ENCODE measurements at regions of chr15 and their contacts with region 1.

Region 1: GRCh38 chr15:52256366-52256765 is 39.2 kb downstream of the MYO5C start:
- DNase-seq: peak; percentile 51 to 87 (median 74)
- ATAC-seq: peak; percentile 93
- H3K4me3 ChIP-seq: no peak overlapping the region
- H3K4me3 Mint-ChIP-seq: peak overlapping the region; percentile 71
- H3K27ac ChIP-seq: no peak overlapping the region
- H3K27ac Mint-ChIP-seq: no peak overlapping the region
- H3K4me1 ChIP-seq: peaks cover 13% of the 10 kb centered on the region
- H3K4me1 Mint-ChIP-seq: peaks cover 18% of the 10 kb centered on the region
- H3K27me3 ChIP-seq: no peaks in the 10 kb centered on the region
- H3K27me3 Mint-ChIP-seq: no peaks in the 10 kb centered on the region
- CTCF ChIP-seq: peak; percentile 65

Region 2: DNA sequence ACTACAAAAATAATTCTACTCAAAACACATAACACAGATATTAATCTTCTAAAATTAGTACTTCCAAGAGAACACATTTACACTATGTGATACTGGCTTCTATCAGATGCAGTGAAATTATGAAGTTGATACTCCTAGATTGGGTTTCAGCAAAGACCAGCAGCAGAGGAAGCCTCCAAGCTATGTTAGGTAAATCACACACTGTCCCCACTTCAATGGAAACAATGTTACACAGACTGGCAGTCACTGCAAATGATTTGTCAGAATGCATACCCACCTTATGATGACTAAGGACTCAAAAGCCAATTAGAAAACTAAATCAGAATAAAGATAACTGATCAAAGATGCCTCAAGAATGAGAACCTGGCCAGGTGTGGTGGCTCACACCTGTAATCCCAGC is 129.3 kb after region 1 on chr15:
- CTCF ChIA-PET with region 1: no interaction called
- POLR2A ChIA-PET with region 1: no interaction called
- intact Hi-C with region 1: loop called in 1 of 2 experiments (anchors 5 kb)
- DNase-seq: no peak
- ATAC-seq: no peak
- H3K4me3 ChIP-seq: no peak overlapping the region
- H3K4me3 Mint-ChIP-seq: no peak overlapping the region
- H3K27ac ChIP-seq: no peak overlapping the region
- H3K27ac Mint-ChIP-seq: no peak overlapping the region
- H3K4me1 ChIP-seq: no peaks in the 10 kb centered on the region
- H3K4me1 Mint-ChIP-seq: no peaks in the 10 kb centered on the region
- H3K27me3 ChIP-seq: no peaks in the 10 kb centered on the region
- H3K27me3 Mint-ChIP-seq: no peaks in the 10 kb centered on the region
- CTCF ChIP-seq: no peak

Region 3: GRCh38 chr15:52481915-52482314 is 225.5 kb after region 1 on chr15:
- CTCF ChIA-PET with region 1: no interaction called
- POLR2A ChIA-PET with region 1: no interaction called
- intact Hi-C with region 1: loop called in 1 of 2 experiments (anchors 5 kb)
- DNase-seq: peak; percentile 24 to 91 (median 53)
- ATAC-seq: peak; percentile 98
- H3K4me3 ChIP-seq: peak overlapping the region in 1 of 2 experiments; percentile 14
- H3K4me3 Mint-ChIP-seq: peak overlapping the region; percentile 27
- H3K27ac ChIP-seq: peak overlapping the region; percentile 15 to 79
- H3K27ac Mint-ChIP-seq: peak overlapping the region; percentile 81
- H3K4me1 ChIP-seq: peaks cover 26% of the 10 kb centered on the region
- H3K4me1 Mint-ChIP-seq: peaks cover 66% of the 10 kb centered on the region
- H3K27me3 ChIP-seq: no peaks in the 10 kb centered on the region
- H3K27me3 Mint-ChIP-seq: no peaks in the 10 kb centered on the region
- CTCF ChIP-seq: no peak

Region 4: GRCh38 chr15:52609593-52609992 is 353.2 kb after region 1 on chr15:
- CTCF ChIA-PET with region 1: no interaction called
- POLR2A ChIA-PET with region 1: no interaction called
- intact Hi-C with region 1: loop called in 1 of 2 experiments (anchors 10 kb)
- DNase-seq: no peak
- ATAC-seq: no peak
- H3K4me3 ChIP-seq: no peak overlapping the region
- H3K4me3 Mint-ChIP-seq: no peak overlapping the region
- H3K27ac ChIP-seq: no peak overlapping the region
- H3K27ac Mint-ChIP-seq: no peak overlapping the region
- H3K4me1 ChIP-seq: no peaks in the 10 kb centered on the region
- H3K4me1 Mint-ChIP-seq: no peaks in the 10 kb centered on the region
- H3K27me3 ChIP-seq: no peaks in the 10 kb centered on the region
- H3K27me3 Mint-ChIP-seq: no peaks in the 10 kb centered on the region
- CTCF ChIP-seq: no peak